Mammary epithelial cell (primary cell): ENCODE measurements at regions of chr17 and their contacts with region 1.

Region 1: DNA sequence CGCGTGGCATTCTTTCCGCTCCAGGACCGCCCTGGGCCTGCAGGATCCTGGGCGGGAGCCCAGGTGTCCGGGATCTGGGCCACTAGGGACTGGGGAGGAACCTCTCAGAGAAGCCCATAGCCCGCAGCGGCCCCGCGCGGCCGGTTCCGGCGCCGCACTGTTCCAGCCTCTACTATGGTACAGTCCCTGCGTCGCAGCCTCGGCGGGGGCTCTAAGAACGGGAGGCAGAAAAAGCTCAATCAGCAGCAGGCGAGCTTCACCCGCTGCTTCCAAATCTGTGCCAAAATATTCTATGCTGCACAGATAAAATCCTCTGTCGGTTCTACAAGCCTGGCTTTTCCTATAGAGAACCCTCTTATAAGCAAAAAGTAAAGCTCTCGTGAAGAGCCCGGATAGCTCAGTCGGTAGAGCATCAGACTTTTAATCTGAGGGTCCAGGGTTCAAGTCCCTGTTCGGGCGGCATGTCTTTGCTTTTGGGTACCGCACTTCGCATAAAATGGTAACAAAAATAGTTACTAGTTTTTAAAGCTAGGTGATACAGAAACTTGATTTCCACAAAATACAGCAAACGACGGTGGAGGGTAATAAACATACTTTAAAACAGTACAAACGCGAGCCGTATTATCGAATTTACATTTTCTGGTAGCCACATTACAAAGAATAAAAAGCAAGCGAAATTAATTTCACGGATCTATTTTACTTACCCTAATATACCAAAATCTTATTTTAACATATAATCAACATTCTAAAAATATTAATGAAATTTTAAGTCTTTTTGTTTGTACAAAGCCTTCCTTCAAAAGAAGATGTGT is 661 bp upstream of the ALOXE3 start:
- DNase-seq: peak; percentile 75
- H3K4me3 ChIP-seq: peak overlapping the region; percentile 54 to 61 (median 57)
- H3K27ac ChIP-seq: peak overlapping the region; percentile 95
- H3K4me1 ChIP-seq: peaks cover 29% of the 10 kb centered on the region
- H3K27me3 ChIP-seq: no peaks in the 10 kb centered on the region
- CTCF ChIP-seq: peak; percentile 61 to 85

Region 2: GRCh38 chr17:8005960-8006730 is 112.8 kb before region 1 on chr17:
- CTCF ChIA-PET with region 1: no interaction called
- dilution Hi-C with region 1: no loop called
- in situ Hi-C with region 1: no loop called
- intact Hi-C with region 1: no loop called
- DNase-seq: no peak
- H3K4me3 ChIP-seq: no peak overlapping the region
- H3K27ac ChIP-seq: no peak overlapping the region
- H3K4me1 ChIP-seq: peaks cover 17% of the 10 kb centered on the region
- H3K27me3 ChIP-seq: no peaks in the 10 kb centered on the region
- CTCF ChIP-seq: no peak

Region 3: DNA sequence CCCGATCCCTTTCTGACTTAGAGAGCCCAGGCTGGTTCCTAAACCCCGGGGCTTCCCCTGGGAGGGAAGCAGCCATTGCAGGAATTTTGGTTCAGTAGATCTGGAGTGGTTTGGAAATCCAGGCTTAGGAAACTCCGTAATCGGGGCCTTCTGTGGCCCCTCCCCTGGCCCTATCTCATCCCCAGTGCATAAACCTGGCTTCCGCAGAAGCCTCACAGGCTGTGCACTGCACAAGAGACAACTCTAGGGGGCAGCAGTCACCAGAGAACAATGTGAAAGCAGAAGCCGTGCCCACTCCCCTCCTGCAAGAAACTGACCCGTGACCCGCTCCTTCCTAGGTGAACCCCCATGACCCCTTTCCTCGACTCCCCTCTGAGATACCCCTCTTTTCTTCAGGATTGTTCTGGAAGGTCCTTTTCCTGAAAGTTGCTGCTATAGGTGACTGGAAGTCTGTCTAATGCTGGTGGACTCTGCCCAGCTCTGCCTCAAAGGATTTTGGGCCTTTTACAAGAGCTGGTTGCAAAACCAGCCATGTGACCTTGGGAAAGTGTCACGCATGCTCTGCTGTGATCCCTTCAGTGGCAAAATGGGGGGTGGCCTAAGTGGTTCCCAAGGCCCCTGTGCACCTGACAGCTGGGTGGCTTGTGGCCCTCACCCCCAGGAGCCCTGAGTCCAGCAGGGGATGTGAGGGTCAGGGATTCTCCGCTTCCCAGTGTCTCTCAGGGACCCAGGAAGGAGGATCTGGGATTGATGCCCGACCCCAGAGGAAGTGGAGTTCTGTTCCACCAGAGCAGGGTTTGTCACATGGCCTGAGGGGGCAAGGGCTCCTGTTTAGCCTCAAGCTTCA is 102.1 kb before region 1 on chr17:
- CTCF ChIA-PET with region 1: interaction called, 4 read pairs
- dilution Hi-C with region 1: no loop called
- in situ Hi-C with region 1: no loop called
- intact Hi-C with region 1: loop called (anchors 2 kb)
- DNase-seq: no peak
- H3K4me3 ChIP-seq: peak overlapping the region in 1 of 3 experiments; percentile 42
- H3K27ac ChIP-seq: no peak overlapping the region
- H3K4me1 ChIP-seq: peaks cover 48% of the 10 kb centered on the region
- H3K27me3 ChIP-seq: no peaks in the 10 kb centered on the region
- CTCF ChIP-seq: peak; percentile 80 to 83

Region 4: GRCh38 chr17:8138672-8139371 is 19.8 kb after region 1 on chr17:
- CTCF ChIA-PET with region 1: interaction called, 9 read pairs
- dilution Hi-C with region 1: no loop called
- in situ Hi-C with region 1: no loop called
- intact Hi-C with region 1: loop called (anchors 1 kb)
- DNase-seq: peak; percentile 96
- H3K4me3 ChIP-seq: peak overlapping the region; percentile 10 to 44 (median 29)
- H3K27ac ChIP-seq: peak overlapping the region; percentile 61
- H3K4me1 ChIP-seq: peaks cover 18% of the 10 kb centered on the region
- H3K27me3 ChIP-seq: no peaks in the 10 kb centered on the region
- CTCF ChIP-seq: peak; percentile 83 to 89

Region 5: DNA sequence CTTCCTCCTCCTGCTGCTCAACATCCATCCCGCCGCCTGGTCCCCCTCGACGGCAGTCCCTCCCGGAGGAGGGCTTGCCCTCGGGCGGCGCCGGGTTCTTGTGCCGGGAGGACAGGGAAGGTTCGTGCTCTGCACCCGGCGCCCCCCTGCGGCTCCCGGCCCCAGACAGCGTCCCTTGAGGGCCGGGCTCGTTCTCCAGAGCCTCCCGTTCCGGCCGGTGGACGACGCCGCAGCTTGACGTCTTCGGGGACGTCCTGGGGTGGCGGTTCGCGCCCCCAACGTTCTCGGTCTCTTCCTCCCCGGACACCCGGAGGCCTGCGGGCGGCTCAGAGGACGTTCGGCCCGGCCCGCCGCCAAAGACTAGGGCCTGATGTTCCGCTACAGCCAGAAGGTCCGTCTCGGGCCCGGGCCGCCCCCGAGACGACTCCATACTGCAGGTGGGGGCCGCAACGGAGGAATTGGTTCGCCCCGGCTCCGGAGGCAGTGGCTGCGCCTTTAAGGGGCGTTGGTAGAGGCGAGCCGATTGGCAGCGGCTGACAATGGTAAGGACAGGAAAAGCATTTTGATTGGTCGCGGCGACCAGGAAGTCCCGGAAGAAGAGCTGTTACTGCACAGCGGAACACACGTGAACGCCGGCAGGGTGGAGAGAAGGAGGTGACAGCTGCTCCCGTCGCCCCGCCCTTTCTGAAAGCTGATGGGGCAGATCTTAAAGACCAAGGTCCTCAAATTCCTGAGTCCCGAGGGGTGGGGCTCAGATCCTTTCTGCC is 70.9 kb after region 1 on chr17 and contains the start of gene BORCS6:
- CTCF ChIA-PET with region 1: no interaction called
- dilution Hi-C with region 1: loop called (anchors 5 kb)
- in situ Hi-C with region 1: loop called in 1 of 2 experiments (anchors 5 kb)
- intact Hi-C with region 1: loop called (anchors 1 kb)
- DNase-seq: peak; percentile 97
- H3K4me3 ChIP-seq: peak within 1 kb of the TSS; percentile 62 to 85 (median 80)
- H3K27ac ChIP-seq: peak within 1 kb of the TSS; percentile 52
- H3K4me1 ChIP-seq: peaks cover 31% of the 10 kb centered on the region
- H3K27me3 ChIP-seq: no peaks in the 10 kb centered on the region
- CTCF ChIP-seq: peak in 1 of 2 donors; percentile 9
- total RNA-seq, gene BORCS6: 4.9 to 8.8 TPM

Region 6: DNA sequence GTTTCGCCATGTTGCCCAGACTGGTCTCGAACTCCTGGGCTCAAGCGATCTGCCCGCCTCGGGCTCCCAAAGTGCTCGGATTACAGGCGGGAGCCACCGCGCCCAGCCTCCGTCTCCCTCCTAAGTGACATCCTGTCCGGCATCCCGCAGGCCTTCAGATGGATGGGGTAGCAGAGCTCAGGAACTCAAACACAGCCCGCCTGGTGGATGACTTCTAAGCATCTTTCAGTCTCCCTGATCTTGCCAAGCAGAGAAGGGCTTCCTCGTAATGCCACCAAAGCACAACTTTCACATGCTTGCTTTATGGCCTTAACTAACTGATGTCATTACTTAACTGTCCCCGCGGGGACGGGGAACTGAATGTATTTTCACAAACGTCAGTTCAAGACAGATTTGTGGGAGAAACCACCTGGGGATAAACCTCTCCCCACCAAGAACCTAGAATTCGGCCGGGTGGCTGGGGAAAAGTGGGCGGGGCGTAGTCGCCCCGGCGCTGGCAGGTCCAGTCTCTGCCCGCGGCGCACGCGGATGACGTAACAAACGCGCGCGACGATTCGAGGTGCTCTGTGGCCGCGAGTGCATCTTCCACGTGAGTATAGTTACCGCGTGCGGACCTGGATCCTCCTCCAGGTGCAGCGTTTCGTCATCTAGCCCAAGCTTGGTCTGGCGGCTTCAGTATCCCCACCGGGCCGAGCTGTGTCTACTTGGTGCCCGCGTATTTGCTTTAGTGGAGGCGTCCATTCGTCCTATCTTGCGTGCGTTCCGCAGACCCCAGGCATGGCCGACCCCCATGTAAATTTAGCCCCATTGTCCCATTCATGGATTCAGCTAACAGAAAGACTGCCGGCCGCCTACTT is 130.0 kb after region 1 on chr17 and contains the start of gene PFAS:
- CTCF ChIA-PET with region 1: no interaction called
- dilution Hi-C with region 1: no loop called
- in situ Hi-C with region 1: no loop called
- intact Hi-C with region 1: loop called (anchors 2 kb)
- DNase-seq: peak; percentile 93
- H3K4me3 ChIP-seq: peak within 1 kb of the TSS; percentile 82 to 96 (median 89)
- H3K27ac ChIP-seq: peak within 1 kb of the TSS; percentile 92
- H3K4me1 ChIP-seq: peaks cover 12% of the 10 kb centered on the region
- H3K27me3 ChIP-seq: no peaks in the 10 kb centered on the region
- CTCF ChIP-seq: no peak
- total RNA-seq, gene PFAS: 8.5 to 31.2 TPM